ENCODE measurements at regions of chr12 and their contacts with region 1.

Region 1: GRCh38 chr12:107917912-107918800 is 143.7 kb downstream of the ASCL4 start:
- DNase-seq: peak; percentile 58 to 61
- H3K4me3 ChIP-seq: no peak overlapping the region
- H3K4me3 Mint-ChIP-seq: no peak overlapping the region
- H3K27ac Mint-ChIP-seq: no peak overlapping the region
- H3K4me1 ChIP-seq: peaks cover 5% of the 10 kb centered on the region; the same call in 1 of the 2 replicates
- H3K4me1 Mint-ChIP-seq: no peaks in the 10 kb centered on the region
- H3K27me3 ChIP-seq: no peaks in the 10 kb centered on the region
- H3K27me3 Mint-ChIP-seq: peaks cover 9% of the 10 kb centered on the region
- CTCF ChIP-seq: peak; percentile 87 to 93

Region 2: GRCh38 chr12:107685360-107686248 is 232.6 kb before region 1 on chr12 and contains the start of gene PWP1:
- CTCF ChIA-PET with region 1: no interaction called
- POLR2A ChIA-PET with region 1: no interaction called
- intact Hi-C with region 1: no loop called
- DNase-seq: peak; percentile 95 to 96
- H3K4me3 ChIP-seq: peak within 1 kb of the TSS; percentile 62
- H3K4me3 Mint-ChIP-seq: peak within 1 kb of the TSS; percentile 76
- H3K27ac Mint-ChIP-seq: peak within 1 kb of the TSS; percentile 97
- H3K4me1 ChIP-seq: peaks cover 7% of the 10 kb centered on the region
- H3K4me1 Mint-ChIP-seq: no peaks in the 10 kb centered on the region
- H3K27me3 ChIP-seq: no peaks in the 10 kb centered on the region
- H3K27me3 Mint-ChIP-seq: no peaks in the 10 kb centered on the region
- CTCF ChIP-seq: no peak
- total RNA-seq, gene PWP1: 42.9 and 44.6 TPM in 2 replicates

Region 3: DNA sequence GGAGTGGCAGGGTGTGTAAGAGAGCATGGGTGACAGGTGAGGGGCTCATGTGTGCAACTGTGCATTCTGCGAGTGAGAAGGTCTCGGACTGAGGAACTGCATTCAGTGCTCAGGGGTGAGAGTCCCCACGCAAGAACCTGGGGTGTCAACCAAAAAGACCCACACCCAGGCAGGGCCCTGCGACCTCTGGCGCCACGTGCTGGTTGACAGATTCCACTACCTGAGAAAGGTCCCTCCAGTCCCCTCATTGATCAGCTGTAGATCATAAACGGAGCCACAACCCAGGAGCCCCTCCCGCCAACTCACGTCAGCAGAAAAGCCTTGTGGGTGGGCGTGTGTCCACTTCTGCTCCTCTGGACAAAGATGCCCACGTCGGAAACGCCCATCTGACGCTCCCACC is 44.9 kb before region 1 on chr12:
- CTCF ChIA-PET with region 1: no interaction called
- POLR2A ChIA-PET with region 1: no interaction called
- intact Hi-C with region 1: no loop called
- DNase-seq: peak in 1 of 2 experiments; percentile 3
- H3K4me3 ChIP-seq: no peak overlapping the region
- H3K4me3 Mint-ChIP-seq: no peak overlapping the region
- H3K27ac Mint-ChIP-seq: no peak overlapping the region
- H3K4me1 ChIP-seq: no peaks in the 10 kb centered on the region
- H3K4me1 Mint-ChIP-seq: no peaks in the 10 kb centered on the region
- H3K27me3 ChIP-seq: no peaks in the 10 kb centered on the region
- H3K27me3 Mint-ChIP-seq: peaks cover 10% of the 10 kb centered on the region
- CTCF ChIP-seq: no peak

Region 4: GRCh38 chr12:107929436-107929835 is 11.3 kb after region 1 on chr12:
- CTCF ChIA-PET with region 1: interaction called, 7 read pairs
- POLR2A ChIA-PET with region 1: no interaction called
- intact Hi-C with region 1: loop called (anchors 1 kb)
- DNase-seq: peak in 1 of 2 experiments; percentile 35
- H3K4me3 ChIP-seq: no peak overlapping the region
- H3K4me3 Mint-ChIP-seq: no peak overlapping the region
- H3K27ac Mint-ChIP-seq: no peak overlapping the region
- H3K4me1 ChIP-seq: no peaks in the 10 kb centered on the region
- H3K4me1 Mint-ChIP-seq: no peaks in the 10 kb centered on the region
- H3K27me3 ChIP-seq: no peaks in the 10 kb centered on the region
- H3K27me3 Mint-ChIP-seq: peaks cover 18% of the 10 kb centered on the region
- CTCF ChIP-seq: peak; percentile 21 to 47

Region 5: GRCh38 chr12:107992870-107993451 is 74.8 kb after region 1 on chr12:
- CTCF ChIA-PET with region 1: interaction called, 12 read pairs
- POLR2A ChIA-PET with region 1: no interaction called
- intact Hi-C with region 1: loop called (anchors 5 kb)
- DNase-seq: peak; percentile 66
- H3K4me3 ChIP-seq: no peak overlapping the region
- H3K4me3 Mint-ChIP-seq: no peak overlapping the region
- H3K27ac Mint-ChIP-seq: no peak overlapping the region
- H3K4me1 ChIP-seq: no peaks in the 10 kb centered on the region
- H3K4me1 Mint-ChIP-seq: no peaks in the 10 kb centered on the region
- H3K27me3 ChIP-seq: no peaks in the 10 kb centered on the region
- H3K27me3 Mint-ChIP-seq: peaks cover 21% of the 10 kb centered on the region
- CTCF ChIP-seq: peak; percentile 62 to 73

Region 6: GRCh38 chr12:108021141-108021540 is 103.0 kb after region 1 on chr12:
- CTCF ChIA-PET with region 1: no interaction called
- POLR2A ChIA-PET with region 1: no interaction called
- intact Hi-C with region 1: no loop called
- DNase-seq: no peak
- H3K4me3 ChIP-seq: no peak overlapping the region
- H3K4me3 Mint-ChIP-seq: no peak overlapping the region
- H3K27ac Mint-ChIP-seq: no peak overlapping the region
- H3K4me1 ChIP-seq: peaks cover 4% of the 10 kb centered on the region
- H3K4me1 Mint-ChIP-seq: no peaks in the 10 kb centered on the region
- H3K27me3 ChIP-seq: no peaks in the 10 kb centered on the region
- H3K27me3 Mint-ChIP-seq: no peaks in the 10 kb centered on the region
- CTCF ChIP-seq: no peak

Region 7: DNA sequence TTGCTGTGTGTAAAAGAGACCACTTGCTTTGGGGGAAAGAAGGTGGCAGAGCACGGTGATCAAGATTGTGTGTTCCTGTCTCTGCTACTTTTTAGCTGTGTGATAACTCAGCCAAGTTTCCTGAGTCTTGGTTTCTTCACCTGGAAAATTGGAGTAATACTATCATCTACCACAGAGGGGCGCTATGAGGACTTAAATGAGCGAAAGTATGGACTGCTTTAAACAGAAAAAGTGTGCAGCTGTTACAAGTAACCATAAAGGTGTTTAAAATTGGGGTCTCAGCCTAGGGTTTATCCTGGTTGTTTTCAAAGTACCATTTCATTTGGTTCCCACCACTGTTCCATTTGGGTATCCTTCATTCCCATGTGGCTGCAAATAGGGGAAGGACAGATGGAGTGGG is 145.0 kb after region 1 on chr12:
- CTCF ChIA-PET with region 1: no interaction called
- POLR2A ChIA-PET with region 1: no interaction called
- intact Hi-C with region 1: loop called (anchors 1 kb)
- DNase-seq: peak in 1 of 2 experiments; percentile 5
- H3K4me3 ChIP-seq: no peak overlapping the region
- H3K4me3 Mint-ChIP-seq: no peak overlapping the region
- H3K27ac Mint-ChIP-seq: no peak overlapping the region
- H3K4me1 ChIP-seq: no peaks in the 10 kb centered on the region
- H3K4me1 Mint-ChIP-seq: no peaks in the 10 kb centered on the region
- H3K27me3 ChIP-seq: no peaks in the 10 kb centered on the region
- H3K27me3 Mint-ChIP-seq: peaks cover 3% of the 10 kb centered on the region
- CTCF ChIP-seq: no peak

Region 8: GRCh38 chr12:108457006-108457733 is 539.0 kb after region 1 on chr12:
- CTCF ChIA-PET with region 1: no interaction called
- POLR2A ChIA-PET with region 1: no interaction called
- intact Hi-C with region 1: loop called (anchors 1 kb)
- DNase-seq: peak; percentile 47 to 62
- H3K4me3 ChIP-seq: no peak overlapping the region
- H3K4me3 Mint-ChIP-seq: no peak overlapping the region
- H3K27ac Mint-ChIP-seq: no peak overlapping the region
- H3K4me1 ChIP-seq: no peaks in the 10 kb centered on the region
- H3K4me1 Mint-ChIP-seq: no peaks in the 10 kb centered on the region
- H3K27me3 ChIP-seq: no peaks in the 10 kb centered on the region
- H3K27me3 Mint-ChIP-seq: peaks cover 8% of the 10 kb centered on the region
- CTCF ChIP-seq: peak; percentile 51 to 71

Region 9: GRCh38 chr12:108514973-108515814 is 597.0 kb after region 1 on chr12 and contains the start of gene FICD:
- CTCF ChIA-PET with region 1: no interaction called
- POLR2A ChIA-PET with region 1: no interaction called
- intact Hi-C with region 1: loop called (anchors 1 kb)
- DNase-seq: peak; percentile 99
- H3K4me3 ChIP-seq: peak within 1 kb of the TSS; percentile 77
- H3K4me3 Mint-ChIP-seq: peak within 1 kb of the TSS; percentile 82
- H3K27ac Mint-ChIP-seq: peak within 1 kb of the TSS; percentile 89
- H3K4me1 ChIP-seq: no peaks in the 10 kb centered on the region
- H3K4me1 Mint-ChIP-seq: peaks cover 18% of the 10 kb centered on the region
- H3K27me3 ChIP-seq: no peaks in the 10 kb centered on the region
- H3K27me3 Mint-ChIP-seq: peaks cover 2% of the 10 kb centered on the region
- CTCF ChIP-seq: no peak
- total RNA-seq, gene FICD: 2.8 and 3.6 TPM in 2 replicates